ENCODE measurements at regions of chr16 and their contacts with region 1.

Region 1: DNA sequence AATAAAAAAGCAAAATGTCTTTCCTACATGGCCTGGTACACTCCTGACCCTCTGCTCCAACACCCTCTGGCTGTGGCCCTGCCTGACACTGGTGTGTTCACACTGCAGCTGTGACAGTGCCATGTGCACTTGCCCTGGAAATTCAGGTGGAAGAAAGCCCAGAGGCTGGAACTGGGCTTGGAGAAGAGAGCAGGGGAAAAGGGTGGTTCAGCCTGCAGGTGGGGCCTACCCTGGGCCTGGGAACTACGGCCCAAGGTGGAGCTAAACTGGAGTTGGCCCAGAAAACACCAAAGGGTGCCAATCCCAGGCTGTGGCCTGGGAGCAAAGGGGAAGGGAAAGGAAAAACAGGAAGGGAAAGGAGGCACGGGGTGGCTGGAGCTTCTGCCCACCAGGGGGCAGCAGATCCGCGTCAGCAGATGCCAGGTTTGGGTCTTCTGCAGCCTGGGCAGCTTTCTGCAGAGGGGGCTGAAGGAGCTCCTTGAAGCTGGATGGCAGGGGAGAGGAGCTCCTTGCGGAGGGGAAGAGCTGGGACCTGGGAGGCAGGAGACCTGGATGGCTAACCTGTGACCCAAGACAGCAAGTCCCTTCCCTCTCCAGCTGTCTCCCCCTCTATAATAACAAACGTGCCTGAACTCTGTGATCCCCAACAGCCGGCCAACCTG is 15.4 kb upstream of the CTCF start:
- DNase-seq: peak; percentile 72 to 84 (median 82)
- H3K4me3 ChIP-seq: peak overlapping the region in 6 of 7 experiments; percentile 10 to 68 (median 50)
- H3K27ac ChIP-seq: peak overlapping the region; percentile 72 to 82
- H3K4me1 ChIP-seq: peaks cover 7 to 81% (median 61%) of the 10 kb centered on the region in 4 experiments
- H3K27me3 ChIP-seq: no peaks in the 10 kb centered on the region

Region 2: GRCh38 chr16:67561824-67562525 is 15.1 kb after region 1 on chr16:
- CTCF ChIA-PET with region 1: interaction called, 308 read pairs
- POLR2A ChIA-PET with region 1: interaction called, 80 read pairs
- DNase-seq: peak; percentile 97 to 99 (median 98)
- H3K4me3 ChIP-seq: peak overlapping the region; percentile 68 to 100 (median 88)
- H3K27ac ChIP-seq: peak overlapping the region; percentile 83 to 96
- H3K4me1 ChIP-seq: peaks cover 15 to 43% (median 35%) of the 10 kb centered on the region in 4 experiments
- H3K27me3 ChIP-seq: no peaks in the 10 kb centered on the region

Region 3: GRCh38 chr16:67595033-67595355 is 48.1 kb after region 1 on chr16:
- CTCF ChIA-PET with region 1: interaction called, 10 read pairs
- POLR2A ChIA-PET with region 1: interaction called, 3 read pairs
- DNase-seq: peak in 1 of 3 donors; percentile 5
- H3K4me3 ChIP-seq: no peak overlapping the region
- H3K27ac ChIP-seq: no peak overlapping the region
- H3K4me1 ChIP-seq: no peaks in the 10 kb centered on the region
- H3K27me3 ChIP-seq: no peaks in the 10 kb centered on the region

Region 4: GRCh38 chr16:67632415-67633172 is 85.7 kb after region 1 on chr16:
- CTCF ChIA-PET with region 1: interaction called, 13 read pairs
- POLR2A ChIA-PET with region 1: no interaction called
- DNase-seq: no peak
- H3K4me3 ChIP-seq: no peak overlapping the region
- H3K27ac ChIP-seq: no peak overlapping the region
- H3K4me1 ChIP-seq: no peaks in the 10 kb centered on the region
- H3K27me3 ChIP-seq: no peaks in the 10 kb centered on the region

Region 5: DNA sequence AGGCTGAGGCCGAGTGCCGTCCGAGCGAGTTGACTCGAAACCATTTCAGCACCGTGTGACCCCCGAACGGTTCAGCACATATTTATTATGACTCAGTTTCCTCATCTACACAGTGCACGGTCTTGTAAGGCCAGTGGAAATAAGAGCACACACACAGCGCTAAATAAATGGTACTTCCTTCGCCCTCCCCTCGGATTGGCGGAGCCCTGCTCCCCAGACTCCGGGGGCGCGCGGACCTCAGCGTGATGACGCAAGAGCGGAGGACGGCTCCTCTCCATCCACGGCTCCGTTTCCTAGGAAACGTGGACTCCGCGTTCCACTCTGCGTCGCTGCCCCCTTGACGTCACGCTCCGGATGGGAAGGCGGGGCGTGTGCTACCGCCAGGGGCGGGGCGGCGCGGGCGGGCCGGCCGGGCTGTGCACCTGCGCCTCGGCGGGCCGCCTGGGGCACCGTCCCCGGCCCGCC is 113.7 kb after region 1 on chr16 and contains the start of gene PARD6A:
- CTCF ChIA-PET with region 1: interaction called, 27 read pairs
- POLR2A ChIA-PET with region 1: interaction called, 6 read pairs
- DNase-seq: peak; percentile 97 to 98 (median 97)
- H3K4me3 ChIP-seq: peak within 1 kb of the TSS; percentile 77 to 99 (median 92)
- H3K27ac ChIP-seq: peak within 1 kb of the TSS; percentile 66 to 90
- H3K4me1 ChIP-seq: peaks cover under 1 to 30% (median 23%) of the 10 kb centered on the region in 4 experiments
- H3K27me3 ChIP-seq: no peaks in the 10 kb centered on the region